ENCODE measurements at regions of chr4 and their contacts with region 1.

Region 1: DNA sequence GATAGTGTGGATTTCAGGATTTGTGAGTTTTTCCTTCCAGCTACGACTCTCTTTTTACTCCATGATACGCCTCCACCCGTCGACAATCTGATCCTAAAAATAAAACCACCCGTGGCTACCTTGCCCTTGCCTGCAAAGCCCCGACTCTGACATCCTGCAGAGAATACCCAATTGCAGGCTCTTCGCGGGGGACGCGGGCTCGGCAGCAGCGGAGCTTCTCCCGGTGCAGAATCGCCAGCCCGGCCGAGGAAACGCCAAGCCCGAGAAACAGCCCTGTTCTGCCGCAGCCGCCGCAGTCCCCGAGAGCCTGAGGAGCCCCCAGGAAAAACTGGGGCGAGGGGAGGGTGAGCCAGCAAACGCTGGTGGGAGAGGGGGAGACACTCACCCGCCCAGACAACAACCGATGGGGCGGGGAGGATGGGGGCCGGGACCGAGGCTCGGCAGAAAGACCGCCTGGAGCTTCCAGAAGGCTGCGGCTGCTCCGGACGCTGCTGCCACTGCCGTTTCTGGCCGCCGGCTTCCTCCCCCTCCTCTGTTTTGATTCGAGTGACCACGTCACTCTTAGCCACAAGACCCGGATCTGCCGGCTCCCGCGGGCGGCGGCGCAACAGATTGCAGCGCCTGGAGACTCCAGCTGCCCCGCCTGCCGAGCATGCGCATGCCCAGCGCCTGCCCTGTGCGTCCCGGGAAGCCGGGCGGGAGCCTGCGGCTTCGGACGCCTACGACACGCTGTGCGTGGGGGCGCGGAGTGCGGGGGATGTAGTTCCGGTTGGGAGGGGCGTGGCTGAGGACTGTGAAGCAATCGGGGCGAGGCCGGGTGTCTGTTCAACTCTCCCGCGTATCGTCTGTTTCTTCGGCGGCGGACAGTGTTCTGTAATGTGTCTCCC is at the start of gene SMIM14:
- DNase-seq: peak; percentile 99 to 100 (median 99)
- ATAC-seq: peak; percentile 99
- H3K4me3 ChIP-seq: peak within 1 kb of the TSS; percentile 90
- H3K27ac ChIP-seq: peak within 1 kb of the TSS; percentile 96
- H3K4me1 ChIP-seq: peaks cover 5% of the 10 kb centered on the region
- H3K27me3 ChIP-seq: no peaks in the 10 kb centered on the region
- total RNA-seq, gene SMIM14: 20.0 to 25.5 (median 21.7) TPM

Region 2: GRCh38 chr4:39469429-39470077 is 169.0 kb before region 1 on chr4:
- intact Hi-C with region 1: loop called in 1 of 4 experiments (anchors 10 kb)
- DNase-seq: peak in 2 of 3 donors; percentile 30 to 63
- ATAC-seq: peak; percentile 69 to 86
- H3K4me3 ChIP-seq: no peak overlapping the region
- H3K27ac ChIP-seq: no peak overlapping the region
- H3K4me1 ChIP-seq: no peaks in the 10 kb centered on the region
- H3K27me3 ChIP-seq: no peaks in the 10 kb centered on the region

Region 3: GRCh38 chr4:39527273-39528060 is 111.1 kb before region 1 on chr4 and contains the start of gene UGDH:
- intact Hi-C with region 1: loop called in 3 of 4 experiments (anchors 5 to 10 kb)
- DNase-seq: peak; percentile 98 to 99 (median 99)
- ATAC-seq: peak; percentile 99
- H3K4me3 ChIP-seq: peak within 1 kb of the TSS; percentile 48
- H3K27ac ChIP-seq: peak within 1 kb of the TSS; percentile 86
- H3K4me1 ChIP-seq: no peaks in the 10 kb centered on the region
- H3K27me3 ChIP-seq: no peaks in the 10 kb centered on the region
- total RNA-seq, gene UGDH: 18.0 to 33.1 (median 22.6) TPM

Region 4: GRCh38 chr4:39657465-39657864 is 18.9 kb after region 1 on chr4:
- intact Hi-C with region 1: no loop called
- DNase-seq: no peak
- ATAC-seq: no peak
- H3K4me3 ChIP-seq: no peak overlapping the region
- H3K27ac ChIP-seq: no peak overlapping the region
- H3K4me1 ChIP-seq: no peaks in the 10 kb centered on the region
- H3K27me3 ChIP-seq: no peaks in the 10 kb centered on the region